Activated CD4-positive, alpha-beta memory T cell treated with anti-CD3 and anti-CD28 coated beads for 36 hours (primary cell): ENCODE measurements at regions of chr14 and their contacts with region 1.

Region 1: DNA sequence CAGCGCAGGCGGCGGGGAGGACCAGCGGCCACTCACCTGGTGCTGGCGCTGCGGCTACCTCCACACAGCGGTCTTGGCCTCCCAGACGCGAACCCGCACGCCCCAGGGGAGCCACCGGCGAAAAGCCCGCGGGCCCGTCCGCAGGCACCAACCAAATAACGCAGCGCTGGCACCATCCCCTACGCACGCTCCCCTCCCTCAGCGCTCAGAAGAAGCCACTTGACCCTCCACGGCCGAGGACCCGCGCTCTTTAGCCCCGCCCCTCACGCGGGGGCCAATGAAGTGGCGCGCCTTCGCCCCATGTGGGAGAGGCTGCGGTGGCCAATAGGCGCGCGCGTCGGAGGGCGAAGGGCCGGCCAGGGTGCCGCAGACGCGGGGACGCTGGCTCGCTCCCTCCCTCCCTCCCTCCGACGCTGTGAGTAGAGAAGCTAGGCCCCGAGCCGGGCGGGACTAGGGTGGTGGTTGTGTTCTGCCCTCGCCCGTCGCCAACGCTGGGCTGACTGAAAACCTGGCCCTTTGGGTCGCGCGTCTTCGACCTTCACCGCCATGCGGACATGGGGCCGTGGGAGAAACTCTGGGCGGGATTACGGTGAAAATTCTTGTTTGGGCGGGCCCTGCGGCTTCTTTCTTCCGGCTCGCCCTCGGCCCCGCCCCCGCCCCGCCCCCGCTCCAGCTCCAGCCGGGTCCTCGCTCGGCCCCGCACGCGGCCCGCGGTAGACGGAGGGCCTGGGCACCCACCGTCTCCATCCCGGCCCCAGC is at the starts of genes DMAC2L and L2HGDH:
- DNase-seq: peak; percentile 93
- H3K4me3 Mint-ChIP-seq: peak within 1 kb of the TSS; percentile 96
- H3K27ac Mint-ChIP-seq: peak within 1 kb of the TSS; percentile 94
- H3K4me1 Mint-ChIP-seq: peaks cover 37% of the 10 kb centered on the region
- H3K27me3 Mint-ChIP-seq: no peaks in the 10 kb centered on the region
- total RNA-seq, gene DMAC2L: 13.4 to 13.9 TPM
- total RNA-seq, gene L2HGDH: 15.0 to 15.2 TPM

Region 2: GRCh38 chr14:49620182-49621113 is 691.7 kb before region 1 on chr14 and contains the starts of genes MGAT2 and RPL36AL:
- CTCF ChIA-PET with region 1: no interaction called
- POLR2A ChIA-PET with region 1: no interaction called
- intact Hi-C with region 1: loop called (anchors 2 kb)
- DNase-seq: peak; percentile 98
- H3K4me3 Mint-ChIP-seq: peak within 1 kb of the TSS; percentile 96
- H3K27ac Mint-ChIP-seq: peak within 1 kb of the TSS; percentile 96
- H3K4me1 Mint-ChIP-seq: peaks cover 39% of the 10 kb centered on the region
- H3K27me3 Mint-ChIP-seq: no peaks in the 10 kb centered on the region
- total RNA-seq, gene MGAT2: 40.4 to 43.7 TPM
- total RNA-seq, gene RPL36AL: 314 to 320 TPM

Region 3: DNA sequence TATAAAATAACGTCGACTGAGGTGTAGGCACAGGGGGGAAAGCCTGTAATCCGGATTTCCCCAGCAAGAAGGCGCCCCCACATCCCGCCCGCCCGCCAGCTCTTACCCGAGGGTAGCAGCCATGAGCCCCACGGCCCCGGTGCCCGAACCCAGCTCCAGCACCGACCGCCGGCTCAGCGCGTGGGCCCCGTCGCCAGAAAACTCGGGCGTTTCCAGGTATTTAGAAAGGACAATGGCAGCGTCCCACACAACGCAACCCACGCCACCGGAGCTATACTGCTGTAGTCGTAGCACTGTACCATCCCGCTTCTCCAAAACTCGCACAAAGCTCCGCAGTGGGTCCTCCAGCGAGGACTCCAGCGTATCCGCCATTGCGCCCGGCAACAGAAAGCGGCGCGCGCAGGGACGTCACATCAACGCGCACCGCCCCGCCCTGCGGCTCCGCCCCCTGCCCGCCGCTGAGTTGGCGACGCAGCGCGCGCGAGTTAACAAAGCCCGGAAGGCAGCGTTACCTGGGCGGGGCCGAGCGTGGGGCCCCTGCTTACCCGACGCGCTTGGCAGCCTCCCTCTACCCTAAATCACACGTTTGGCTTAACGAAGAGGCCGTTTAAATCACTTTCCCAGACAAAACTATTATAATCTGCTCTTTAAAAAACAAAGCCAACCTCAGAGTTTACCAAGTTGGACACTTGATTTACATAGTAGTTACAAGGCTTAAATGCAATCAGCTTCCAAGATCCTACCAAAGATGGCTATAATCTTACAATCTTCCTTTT is 195.8 kb before region 1 on chr14 and contains the start of gene VCPKMT:
- CTCF ChIA-PET with region 1: no interaction called
- POLR2A ChIA-PET with region 1: interaction called, 4 read pairs
- intact Hi-C with region 1: loop called (anchors 1 kb)
- DNase-seq: peak; percentile 96
- H3K4me3 Mint-ChIP-seq: peak within 1 kb of the TSS; percentile 98
- H3K27ac Mint-ChIP-seq: peak within 1 kb of the TSS; percentile 95
- H3K4me1 Mint-ChIP-seq: peaks cover 37% of the 10 kb centered on the region
- H3K27me3 Mint-ChIP-seq: no peaks in the 10 kb centered on the region
- total RNA-seq, gene VCPKMT: 7.7 to 10.1 TPM

Region 4: GRCh38 chr14:50231475-50232275 is 80.5 kb before region 1 on chr14 and contains the start of gene SOS2:
- CTCF ChIA-PET with region 1: interaction called, 3 read pairs
- POLR2A ChIA-PET with region 1: no interaction called
- intact Hi-C with region 1: loop called (anchors 1 kb)
- DNase-seq: peak; percentile 86
- H3K4me3 Mint-ChIP-seq: peak within 1 kb of the TSS; percentile 78
- H3K27ac Mint-ChIP-seq: peak within 1 kb of the TSS; percentile 85
- H3K4me1 Mint-ChIP-seq: peaks cover 40% of the 10 kb centered on the region
- H3K27me3 Mint-ChIP-seq: no peaks in the 10 kb centered on the region
- total RNA-seq, gene SOS2: 19.6 to 20.9 TPM

Region 5: DNA sequence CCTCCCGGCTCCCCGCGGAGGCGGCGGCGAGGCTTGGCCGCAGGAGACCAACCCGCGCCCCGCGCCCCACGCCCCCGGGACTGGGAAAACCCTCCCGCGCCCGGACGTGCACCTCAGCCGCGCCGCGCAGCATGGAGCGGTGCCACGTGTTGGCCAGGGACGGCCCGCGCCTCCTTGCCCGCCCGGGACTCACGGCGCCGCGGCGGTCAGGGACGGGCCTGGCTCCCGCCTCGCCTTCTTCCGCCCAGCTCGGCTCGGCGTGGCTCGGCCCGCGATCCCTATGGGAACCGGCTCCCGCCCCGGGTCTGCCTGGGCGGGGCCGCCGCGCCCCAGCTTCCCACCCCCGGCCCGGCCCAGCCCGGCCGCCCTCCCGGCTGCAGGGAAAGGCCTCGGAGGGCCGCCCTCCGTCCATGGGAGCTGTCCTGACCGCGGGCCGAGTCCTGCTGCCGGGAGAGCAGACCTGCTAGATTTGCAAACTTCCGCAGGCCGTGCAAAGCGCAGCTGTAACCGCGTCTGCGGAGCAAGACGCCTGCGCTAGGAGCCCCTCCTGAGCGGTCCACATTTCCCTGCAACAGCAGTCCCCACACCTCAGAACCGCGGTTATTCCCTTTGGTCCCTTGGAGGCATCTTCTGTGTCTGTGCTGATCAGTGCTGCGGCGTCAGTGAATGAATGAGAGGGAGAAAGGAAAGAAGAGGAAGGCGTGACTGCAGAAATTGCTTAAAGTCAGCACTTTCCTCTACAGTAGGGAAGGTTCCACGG is 84.7 kb after region 1 on chr14 and contains the start of gene CDKL1:
- CTCF ChIA-PET with region 1: interaction called, 15 read pairs
- POLR2A ChIA-PET with region 1: no interaction called
- intact Hi-C with region 1: loop called (anchors 2 kb)
- DNase-seq: peak; percentile 57
- H3K4me3 Mint-ChIP-seq: peak within 1 kb of the TSS; percentile 82
- H3K27ac Mint-ChIP-seq: no peak within 1 kb of the TSS
- H3K4me1 Mint-ChIP-seq: peaks cover 11% of the 10 kb centered on the region
- H3K27me3 Mint-ChIP-seq: peaks cover 4% of the 10 kb centered on the region
- total RNA-seq, gene CDKL1: 2.4 to 3.4 TPM

Region 6: GRCh38 chr14:50667996-50668825 is 356.1 kb after region 1 on chr14 and contains the start of gene SAV1:
- CTCF ChIA-PET with region 1: no interaction called
- POLR2A ChIA-PET with region 1: no interaction called
- intact Hi-C with region 1: loop called (anchors 5 kb)
- DNase-seq: peak; percentile 67
- H3K4me3 Mint-ChIP-seq: no peak within 1 kb of the TSS
- H3K27ac Mint-ChIP-seq: peak within 1 kb of the TSS; percentile 63
- H3K4me1 Mint-ChIP-seq: peaks cover 18% of the 10 kb centered on the region
- H3K27me3 Mint-ChIP-seq: no peaks in the 10 kb centered on the region
- total RNA-seq, gene SAV1: 13.4 to 13.5 TPM